Activated naive CD4-positive, alpha-beta T cell treated with anti-CD3 and anti-CD28 coated beads for 36 hours (primary cell): ENCODE measurements at regions of chr5 and their contacts with region 1.

Region 1: GRCh38 chr5:33588654-33589372 is 148.0 kb downstream of the TARS1 start:
- DNase-seq: peak; percentile 65
- H3K4me3 Mint-ChIP-seq: no peak overlapping the region
- H3K27ac Mint-ChIP-seq: no peak overlapping the region
- H3K4me1 Mint-ChIP-seq: no peaks in the 10 kb centered on the region
- H3K27me3 Mint-ChIP-seq: no peaks in the 10 kb centered on the region

Region 2: GRCh38 chr5:33182986-33183385 is 405.8 kb before region 1 on chr5:
- CTCF ChIA-PET with region 1: no interaction called
- intact Hi-C with region 1: no loop called
- DNase-seq: no peak
- H3K4me3 Mint-ChIP-seq: no peak overlapping the region
- H3K27ac Mint-ChIP-seq: no peak overlapping the region
- H3K4me1 Mint-ChIP-seq: no peaks in the 10 kb centered on the region
- H3K27me3 Mint-ChIP-seq: no peaks in the 10 kb centered on the region

Region 3: DNA sequence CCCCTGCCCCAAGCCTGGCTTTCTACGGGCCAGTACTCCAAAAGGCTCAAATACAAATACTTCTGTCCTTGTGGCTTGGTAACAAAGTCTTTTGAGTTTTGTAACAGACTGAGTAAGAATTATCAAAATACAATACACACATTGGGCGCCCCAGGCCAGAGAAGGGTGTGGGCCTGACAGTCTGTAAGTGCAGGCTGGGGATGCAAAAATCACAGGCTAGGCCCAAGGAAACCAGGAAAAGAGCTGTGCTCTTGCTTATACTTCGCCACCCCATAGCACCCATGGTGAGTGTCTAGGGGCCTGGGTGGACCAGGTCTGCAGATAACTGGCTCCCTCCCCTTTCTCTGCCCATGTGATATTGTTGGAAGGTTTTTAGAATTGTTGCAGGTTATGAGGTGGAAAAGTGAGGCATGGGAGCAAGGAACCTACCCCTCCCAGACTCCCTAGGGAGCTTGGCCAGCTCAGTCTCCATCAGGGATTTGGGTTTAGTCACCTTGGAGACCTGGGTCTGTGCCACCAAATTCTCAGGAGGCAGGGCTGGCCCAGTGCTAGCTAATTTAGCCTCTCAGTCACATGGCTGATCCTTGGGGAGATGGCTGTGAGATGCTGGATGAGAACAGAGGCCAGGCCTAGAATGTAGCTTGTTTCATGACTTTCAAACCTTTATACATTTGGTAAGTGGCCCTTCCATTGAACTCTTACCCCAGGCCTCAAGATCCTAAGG is 75.2 kb before region 1 on chr5:
- CTCF ChIA-PET with region 1: no interaction called
- intact Hi-C with region 1: no loop called
- DNase-seq: no peak
- H3K4me3 Mint-ChIP-seq: no peak overlapping the region
- H3K27ac Mint-ChIP-seq: no peak overlapping the region
- H3K4me1 Mint-ChIP-seq: no peaks in the 10 kb centered on the region
- H3K27me3 Mint-ChIP-seq: no peaks in the 10 kb centered on the region

Region 4: GRCh38 chr5:33576726-33577590 is 11.9 kb before region 1 on chr5:
- CTCF ChIA-PET with region 1: interaction called, 18 read pairs
- intact Hi-C with region 1: no loop called
- DNase-seq: no peak
- H3K4me3 Mint-ChIP-seq: no peak overlapping the region
- H3K27ac Mint-ChIP-seq: no peak overlapping the region
- H3K4me1 Mint-ChIP-seq: no peaks in the 10 kb centered on the region
- H3K27me3 Mint-ChIP-seq: peaks cover 4% of the 10 kb centered on the region

Region 5: GRCh38 chr5:33761139-33761538 is 172.3 kb after region 1 on chr5:
- CTCF ChIA-PET with region 1: no interaction called
- intact Hi-C with region 1: no loop called
- DNase-seq: no peak
- H3K4me3 Mint-ChIP-seq: no peak overlapping the region
- H3K27ac Mint-ChIP-seq: no peak overlapping the region
- H3K4me1 Mint-ChIP-seq: no peaks in the 10 kb centered on the region
- H3K27me3 Mint-ChIP-seq: no peaks in the 10 kb centered on the region

Region 6: DNA sequence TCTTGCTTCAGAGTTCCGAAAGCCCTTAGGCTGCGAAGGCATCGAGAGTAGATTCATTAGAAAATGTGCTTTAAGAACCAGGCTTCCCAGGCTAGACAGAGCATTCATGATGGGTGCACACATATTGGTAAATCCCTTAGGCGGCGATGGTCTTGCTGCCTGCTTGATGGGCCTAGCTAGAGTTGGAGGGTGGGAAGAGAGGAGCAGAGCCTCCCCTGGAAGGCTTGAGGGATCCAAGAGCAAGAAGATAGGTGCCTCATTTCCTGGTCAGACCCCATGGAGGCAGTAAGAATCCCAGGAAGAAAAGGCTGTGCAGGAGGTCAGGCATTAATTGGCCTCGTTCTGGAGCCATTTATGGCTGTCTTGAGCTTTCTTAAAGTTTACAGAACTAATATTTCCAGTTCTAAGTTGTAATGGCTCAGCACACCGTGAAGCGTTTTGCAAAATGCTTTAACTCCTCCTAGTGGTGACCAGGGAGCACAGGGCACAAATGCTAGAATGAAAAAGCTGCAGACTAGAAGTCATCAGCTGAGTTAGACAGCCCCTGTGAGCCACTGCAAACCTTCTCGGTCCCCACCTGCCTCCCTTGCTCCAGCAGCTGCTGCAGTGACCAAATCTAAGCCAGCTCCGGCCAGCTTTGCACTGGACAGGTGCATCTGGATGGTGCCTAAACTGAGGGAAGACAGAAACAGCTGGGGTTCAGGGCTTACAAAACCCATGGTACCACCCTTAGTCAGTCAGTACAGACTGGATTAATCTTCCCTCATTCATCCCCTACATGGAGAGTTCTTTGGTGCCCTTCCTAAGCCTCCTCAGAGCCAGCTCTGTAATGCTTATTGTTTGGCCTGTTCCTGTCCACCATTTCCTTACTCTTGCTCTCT is 381.0 kb after region 1 on chr5:
- CTCF ChIA-PET with region 1: interaction called, 15 read pairs
- intact Hi-C with region 1: loop called (anchors 1 kb)
- DNase-seq: peak; percentile 12
- H3K4me3 Mint-ChIP-seq: no peak overlapping the region
- H3K27ac Mint-ChIP-seq: no peak overlapping the region
- H3K4me1 Mint-ChIP-seq: peaks cover 13% of the 10 kb centered on the region
- H3K27me3 Mint-ChIP-seq: no peaks in the 10 kb centered on the region

Region 7: GRCh38 chr5:34459908-34460307 is 871.1 kb after region 1 on chr5:
- CTCF ChIA-PET with region 1: no interaction called
- intact Hi-C with region 1: loop called (anchors 10 kb)
- DNase-seq: no peak
- H3K4me3 Mint-ChIP-seq: no peak overlapping the region
- H3K27ac Mint-ChIP-seq: no peak overlapping the region
- H3K4me1 Mint-ChIP-seq: peaks cover under 1% of the 10 kb centered on the region
- H3K27me3 Mint-ChIP-seq: peaks cover 4% of the 10 kb centered on the region